HCT116 (cell line): ENCODE measurements at regions of chr5 and their contacts with region 1.

Region 1: GRCh38 chr5:170225326-170226128 is 7.3 kb upstream of the C5orf58 start:
- DNase-seq: peak; percentile 50
- ATAC-seq: peak; percentile 87
- H3K4me3 ChIP-seq: no peak overlapping the region
- H3K27ac ChIP-seq: no peak overlapping the region
- H3K4me1 ChIP-seq: no peaks in the 10 kb centered on the region
- H3K27me3 ChIP-seq: peaks cover 16% of the 10 kb centered on the region
- CTCF ChIP-seq: peak; percentile 68 to 87 (median 86)
- POLR2A ChIP-seq: no peak
- RAD21 ChIP-seq: peak; percentile 83

Region 2: GRCh38 chr5:170235876-170236864 is 10.6 kb after region 1 on chr5:
- CTCF ChIA-PET with region 1: interaction called, 11 read pairs
- POLR2A ChIA-PET with region 1: no interaction called
- RAD21 ChIA-PET with region 1: no interaction called
- intact Hi-C with region 1: no loop called
- DNase-seq: no peak
- ATAC-seq: no peak
- H3K4me3 ChIP-seq: no peak overlapping the region
- H3K27ac ChIP-seq: no peak overlapping the region
- H3K4me1 ChIP-seq: no peaks in the 10 kb centered on the region
- H3K27me3 ChIP-seq: peaks cover 34% of the 10 kb centered on the region
- CTCF ChIP-seq: no peak
- POLR2A ChIP-seq: no peak
- RAD21 ChIP-seq: no peak

Region 3: GRCh38 chr5:170267431-170268152 is 42.1 kb after region 1 on chr5:
- CTCF ChIA-PET with region 1: interaction called, 12 read pairs
- POLR2A ChIA-PET with region 1: no interaction called
- RAD21 ChIA-PET with region 1: no interaction called
- intact Hi-C with region 1: loop called (anchors 1 kb)
- DNase-seq: peak; percentile 37
- ATAC-seq: peak; percentile 97
- H3K4me3 ChIP-seq: no peak overlapping the region
- H3K27ac ChIP-seq: no peak overlapping the region
- H3K4me1 ChIP-seq: no peaks in the 10 kb centered on the region
- H3K27me3 ChIP-seq: peaks cover 43% of the 10 kb centered on the region
- CTCF ChIP-seq: peak; percentile 82 to 85 (median 84)
- POLR2A ChIP-seq: no peak
- RAD21 ChIP-seq: peak; percentile 56

Region 4: DNA sequence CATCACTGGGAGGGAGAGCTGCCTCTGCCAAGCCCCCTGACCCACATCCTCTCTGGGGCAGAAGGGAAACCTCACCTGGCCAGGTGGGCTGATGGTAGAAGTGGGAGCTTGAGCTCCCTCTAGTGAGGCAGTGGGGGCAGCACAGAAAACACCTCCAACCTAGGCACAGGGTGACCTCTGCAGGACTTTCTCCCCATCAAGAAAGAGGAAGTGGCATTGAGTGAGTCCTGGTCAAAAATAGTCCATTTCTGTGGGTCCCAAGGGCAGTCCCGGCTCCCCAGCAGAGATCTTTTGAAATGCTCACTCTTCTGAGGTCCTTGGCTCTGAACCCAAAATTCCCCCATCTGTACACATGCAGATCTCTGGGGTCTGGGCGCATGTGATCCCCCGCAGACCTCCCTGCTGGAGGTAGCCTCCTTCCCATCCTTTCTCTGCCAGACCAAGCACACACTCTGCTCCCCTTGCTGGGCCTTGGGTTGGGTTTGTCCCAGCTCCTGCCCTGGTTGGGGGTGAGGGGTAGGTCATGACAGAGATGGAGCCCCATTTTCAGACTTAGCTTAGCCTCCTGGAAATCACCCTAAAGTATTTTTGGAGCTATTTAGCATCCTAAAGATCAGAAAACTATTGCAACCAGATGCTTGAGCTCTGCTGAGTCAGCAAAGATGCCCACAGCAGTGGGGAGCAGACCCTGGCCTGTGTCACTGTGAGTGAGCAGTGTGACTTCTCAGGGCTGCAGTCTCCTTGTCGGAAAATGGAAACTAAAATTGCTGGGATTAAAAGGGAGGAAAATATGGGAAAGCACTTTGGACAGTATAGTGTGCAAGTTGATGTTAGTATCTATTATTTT is 113.6 kb after region 1 on chr5:
- CTCF ChIA-PET with region 1: interaction called, 24 read pairs
- POLR2A ChIA-PET with region 1: no interaction called
- RAD21 ChIA-PET with region 1: no interaction called
- intact Hi-C with region 1: loop called (anchors 1 kb)
- DNase-seq: peak; percentile 13
- ATAC-seq: peak; percentile 95
- H3K4me3 ChIP-seq: no peak overlapping the region
- H3K27ac ChIP-seq: no peak overlapping the region
- H3K4me1 ChIP-seq: no peaks in the 10 kb centered on the region
- H3K27me3 ChIP-seq: peaks cover 38% of the 10 kb centered on the region
- CTCF ChIP-seq: peak; percentile 79 to 99 (median 81)
- POLR2A ChIP-seq: no peak
- RAD21 ChIP-seq: peak; percentile 88

Region 5: GRCh38 chr5:170420780-170421412 is 195.4 kb after region 1 on chr5:
- CTCF ChIA-PET with region 1: interaction called, 47 read pairs
- POLR2A ChIA-PET with region 1: no interaction called
- RAD21 ChIA-PET with region 1: no interaction called
- intact Hi-C with region 1: loop called (anchors 1 kb)
- DNase-seq: peak; percentile 68
- ATAC-seq: peak; percentile 93
- H3K4me3 ChIP-seq: no peak overlapping the region
- H3K27ac ChIP-seq: no peak overlapping the region
- H3K4me1 ChIP-seq: no peaks in the 10 kb centered on the region
- H3K27me3 ChIP-seq: peaks cover 15% of the 10 kb centered on the region
- CTCF ChIP-seq: peak; percentile 58 to 82 (median 81)
- POLR2A ChIP-seq: no peak
- RAD21 ChIP-seq: peak; percentile 68

Region 6: GRCh38 chr5:170623576-170624181 is 398.2 kb after region 1 on chr5:
- CTCF ChIA-PET with region 1: interaction called, 5 read pairs
- POLR2A ChIA-PET with region 1: no interaction called
- RAD21 ChIA-PET with region 1: no interaction called
- intact Hi-C with region 1: loop called (anchors 2 kb)
- DNase-seq: peak; percentile 48
- ATAC-seq: peak; percentile 96
- H3K4me3 ChIP-seq: no peak overlapping the region
- H3K27ac ChIP-seq: no peak overlapping the region
- H3K4me1 ChIP-seq: no peaks in the 10 kb centered on the region
- H3K27me3 ChIP-seq: peaks cover 14% of the 10 kb centered on the region; the same call in 1 of the 2 replicates
- CTCF ChIP-seq: peak; percentile 79 to 83 (median 81)
- POLR2A ChIP-seq: no peak
- RAD21 ChIP-seq: peak; percentile 90